Sigmoid colon (tissue), 7 donors: ENCODE measurements at regions of chr4 and their contacts with region 1.

Region 1: DNA sequence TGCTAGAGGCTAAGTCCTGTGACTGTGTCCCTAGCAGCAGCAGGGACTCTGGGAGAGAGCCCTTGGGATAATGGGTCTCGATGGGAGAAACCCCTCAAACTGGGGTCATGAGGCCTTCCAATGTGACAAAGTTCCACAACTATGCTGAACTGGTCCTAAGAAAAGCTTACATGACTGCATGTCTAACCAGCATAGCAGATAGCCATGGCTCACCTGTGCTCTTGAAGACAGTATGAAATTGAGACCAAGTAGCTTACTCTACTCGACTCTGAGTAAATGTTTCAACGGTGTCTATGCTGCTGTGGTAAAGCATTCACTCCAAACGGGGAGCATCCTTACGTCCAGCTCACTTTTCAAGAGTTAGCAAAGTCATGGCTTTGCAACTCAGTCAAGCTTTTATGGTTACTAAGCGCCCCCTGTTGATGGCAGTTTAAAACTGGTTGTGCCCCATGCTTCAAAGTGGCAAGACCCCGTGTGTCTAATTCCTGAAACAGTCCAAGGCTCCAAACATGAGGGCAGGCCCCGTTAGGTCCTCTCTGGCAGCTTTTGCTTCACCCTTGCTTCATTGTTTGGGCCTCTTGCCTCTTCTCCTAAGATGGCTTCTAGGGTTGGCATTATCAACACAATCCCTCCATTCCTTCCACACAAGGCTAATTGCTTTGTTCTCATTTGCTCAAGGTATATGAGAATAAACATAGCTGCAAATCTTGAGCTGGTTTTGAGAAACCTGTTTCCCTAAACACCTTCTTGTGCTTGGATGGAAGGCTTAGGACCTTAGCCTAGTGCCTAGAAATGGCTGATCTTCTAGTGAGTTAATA is 46.6 kb downstream of the CCNG2 start:
- DNase-seq: peak; percentile 74
- H3K4me3 ChIP-seq: no peak overlapping the region
- H3K27ac ChIP-seq: no peak overlapping the region
- H3K4me1 ChIP-seq: no peaks in the 10 kb centered on the region
- H3K27me3 ChIP-seq: no peaks in the 10 kb centered on the region
- CTCF ChIP-seq: peak; percentile 31 to 69 (median 58)
- EP300 ChIP-seq: no peak
- POLR2A ChIP-seq: no peak

Region 2: DNA sequence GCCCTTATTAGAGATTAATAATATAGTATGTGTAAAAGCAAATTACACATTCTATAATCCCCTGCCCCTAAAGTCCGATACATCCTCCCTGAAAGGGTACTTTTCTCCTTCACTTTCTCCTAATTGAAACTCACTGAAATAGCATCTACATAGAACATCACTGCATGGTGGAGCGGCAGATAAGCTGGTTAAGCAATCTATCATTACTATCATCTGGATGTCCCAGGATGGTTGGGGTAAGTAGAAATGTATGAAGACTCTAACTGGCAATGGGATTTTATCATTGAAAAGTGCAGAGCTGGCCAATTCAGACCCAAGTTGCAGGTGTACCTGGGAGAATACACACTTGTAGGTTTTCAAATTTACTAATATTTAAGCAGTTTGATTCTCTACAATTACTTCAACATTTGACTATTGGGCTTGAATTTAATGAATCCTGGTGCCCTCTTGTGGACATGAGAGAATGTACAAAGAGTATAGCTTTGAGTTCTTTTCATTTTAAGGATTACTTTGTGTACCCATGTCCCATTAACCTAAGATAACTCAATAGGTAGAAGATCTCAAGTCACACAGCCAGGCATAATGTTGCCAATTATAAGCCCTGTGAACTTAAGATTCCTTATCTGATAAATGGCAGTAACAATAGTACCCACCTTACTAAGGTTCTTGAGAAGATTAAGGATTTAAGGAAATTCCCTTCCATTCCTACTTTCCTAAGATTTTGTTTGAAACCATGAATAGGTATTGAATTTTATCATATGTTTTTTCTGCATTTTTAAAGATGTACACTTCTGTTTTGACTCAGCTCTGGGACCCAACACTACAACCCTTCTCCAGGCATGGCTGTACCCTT is 698.8 kb before region 1 on chr4:
- intact Hi-C with region 1: loop called (anchors 2 kb)
- DNase-seq: no peak
- H3K4me3 ChIP-seq: no peak overlapping the region
- H3K27ac ChIP-seq: no peak overlapping the region
- H3K4me1 ChIP-seq: no peaks in the 10 kb centered on the region
- H3K27me3 ChIP-seq: no peaks in the 10 kb centered on the region
- CTCF ChIP-seq: peak; percentile 15 to 74 (median 60)
- EP300 ChIP-seq: no peak
- POLR2A ChIP-seq: no peak

Region 3: GRCh38 chr4:77052352-77052751 is 151.2 kb before region 1 on chr4:
- intact Hi-C with region 1: loop called (anchors 5 kb)
- DNase-seq: no peak
- H3K4me3 ChIP-seq: no peak overlapping the region
- H3K27ac ChIP-seq: no peak overlapping the region
- H3K4me1 ChIP-seq: peaks cover 0 to 9% (median 4%) of the 10 kb centered on the region in 4 donors
- H3K27me3 ChIP-seq: no peaks in the 10 kb centered on the region
- CTCF ChIP-seq: peak in 1 of 4 experiments; percentile 9
- EP300 ChIP-seq: no peak
- POLR2A ChIP-seq: no peak

Region 4: DNA sequence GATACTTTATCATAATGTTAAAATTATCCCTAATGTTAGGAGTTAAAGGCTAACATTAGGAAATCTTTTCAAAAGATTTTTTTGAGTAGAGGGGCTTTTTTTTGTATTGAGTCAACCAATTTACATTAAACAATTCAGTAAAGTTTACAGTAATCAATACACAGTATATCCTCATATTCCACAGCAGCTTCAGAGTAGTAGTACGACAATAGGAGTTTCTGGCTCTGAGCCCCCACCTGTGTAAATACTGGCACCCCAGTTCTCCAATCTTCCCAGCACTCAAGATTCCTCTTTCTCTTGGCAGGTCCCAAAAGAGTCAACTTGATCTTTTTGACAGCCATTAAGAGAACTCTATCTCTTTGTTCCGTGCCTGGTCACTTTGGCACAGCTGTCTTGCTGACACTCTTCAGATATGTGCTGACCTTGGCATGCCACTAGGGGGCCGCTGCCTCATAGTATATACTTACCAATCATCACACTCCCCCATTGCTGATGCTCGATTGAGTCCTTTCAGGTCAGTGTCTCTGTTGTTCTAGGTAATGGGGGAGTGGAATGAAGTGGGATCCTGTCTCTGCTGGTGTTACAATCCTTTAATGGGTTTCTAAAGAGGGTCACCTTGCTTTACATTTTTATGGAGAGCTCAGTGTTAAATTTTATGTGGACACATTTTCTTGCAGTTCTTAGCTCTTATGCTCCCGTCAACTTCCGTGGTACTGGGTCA is 108.3 kb before region 1 on chr4:
- intact Hi-C with region 1: loop called (anchors 1 kb)
- DNase-seq: peak; percentile 86
- H3K4me3 ChIP-seq: no peak overlapping the region
- H3K27ac ChIP-seq: no peak overlapping the region
- H3K4me1 ChIP-seq: peaks cover 0 to 5% (median 0%) of the 10 kb centered on the region in 4 donors
- H3K27me3 ChIP-seq: no peaks in the 10 kb centered on the region
- CTCF ChIP-seq: peak; percentile 46 to 78 (median 70)
- EP300 ChIP-seq: no peak
- POLR2A ChIP-seq: no peak

Region 5: GRCh38 chr4:77141964-77142645 is 61.5 kb before region 1 on chr4:
- intact Hi-C with region 1: no loop called
- DNase-seq: no peak
- H3K4me3 ChIP-seq: no peak overlapping the region
- H3K27ac ChIP-seq: no peak overlapping the region
- H3K4me1 ChIP-seq: no peaks in the 10 kb centered on the region
- H3K27me3 ChIP-seq: no peaks in the 10 kb centered on the region
- CTCF ChIP-seq: no peak
- EP300 ChIP-seq: no peak
- POLR2A ChIP-seq: no peak